ENCODE measurements at regions of chr12 and their contacts with region 1.

Region 1: DNA sequence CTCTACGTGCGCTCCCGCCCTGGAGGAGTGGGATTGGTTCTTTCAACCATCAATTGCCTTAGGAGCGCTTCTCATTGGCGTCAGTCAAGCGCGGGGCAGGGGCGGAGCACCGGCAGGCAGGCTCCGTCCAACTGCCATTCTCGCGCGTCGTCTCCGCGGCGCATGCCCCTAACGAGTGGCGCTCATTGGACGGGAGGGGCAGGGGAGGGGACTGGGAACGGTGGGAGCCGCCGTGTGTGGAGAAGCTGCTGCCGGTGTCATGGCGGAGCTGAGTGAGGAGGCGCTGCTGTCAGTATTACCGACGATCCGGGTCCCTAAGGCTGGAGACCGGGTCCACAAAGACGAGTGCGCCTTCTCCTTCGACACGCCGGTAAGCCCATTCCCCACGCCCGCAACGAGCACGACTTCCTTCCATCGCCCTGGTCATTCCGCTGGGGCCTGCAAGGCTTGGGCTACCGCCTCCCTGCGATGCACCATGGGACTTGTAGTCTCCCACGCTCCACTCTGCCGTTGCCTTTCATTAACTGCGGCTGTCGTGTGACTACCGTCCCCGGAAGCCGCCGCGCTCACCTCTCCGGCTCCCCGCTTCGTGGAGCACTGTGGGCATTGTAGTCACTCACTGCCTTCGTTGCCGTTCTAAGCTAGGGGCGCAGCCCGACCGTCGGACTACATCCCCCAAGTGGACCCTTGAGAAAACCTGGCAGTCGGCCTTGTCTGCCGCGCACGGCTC is at the start of gene USP5:
- H3K4me3 ChIP-seq: peak within 1 kb of the TSS; percentile 76
- H3K27ac ChIP-seq: peak within 1 kb of the TSS; percentile 58
- H3K4me1 ChIP-seq: peaks cover 11% of the 10 kb centered on the region
- CTCF ChIP-seq: peak; percentile 70

Region 2: GRCh38 chr12:6833189-6833890 is 18.7 kb before region 1 on chr12:
- CTCF ChIA-PET with region 1: interaction called, 75 read pairs
- POLR2A ChIA-PET with region 1: interaction called, 55 read pairs
- H3K4me3 ChIP-seq: no peak overlapping the region
- H3K27ac ChIP-seq: no peak overlapping the region
- H3K4me1 ChIP-seq: no peaks in the 10 kb centered on the region
- CTCF ChIP-seq: no peak

Region 3: DNA sequence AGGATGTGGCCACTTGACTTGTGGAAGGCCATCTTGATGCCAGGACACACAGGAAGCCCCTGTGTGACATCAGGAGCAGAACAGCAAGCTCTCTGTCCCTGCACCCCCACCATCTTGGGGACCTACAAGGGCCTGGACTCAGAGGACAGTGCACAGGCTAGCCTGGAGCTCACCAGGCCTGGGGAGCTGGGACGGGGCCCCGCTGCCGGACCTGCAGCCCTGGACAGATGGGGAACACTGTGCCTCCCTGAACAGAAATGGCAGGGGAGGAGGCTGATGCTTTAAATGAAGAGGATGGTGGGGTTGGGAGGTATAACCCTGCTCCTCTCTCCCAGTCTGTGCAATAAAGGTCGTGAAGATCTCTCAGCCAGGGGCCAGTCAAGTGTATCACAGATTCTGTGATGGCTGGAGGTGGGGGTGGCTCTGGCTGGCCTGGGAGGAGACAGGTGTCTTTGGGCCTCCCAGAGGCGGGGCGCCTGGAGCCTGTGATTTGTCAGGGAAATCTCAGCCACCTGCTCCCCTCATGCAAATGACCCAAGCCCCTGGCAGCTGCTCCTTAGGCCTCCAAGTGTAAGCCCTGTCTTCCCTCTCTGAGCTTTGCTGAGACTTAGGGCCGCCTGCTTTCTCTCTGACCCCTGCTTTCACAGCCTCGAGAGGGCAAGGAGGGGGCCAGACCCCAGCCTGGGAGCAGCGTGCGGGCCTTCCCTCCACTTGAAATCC is 12.4 kb before region 1 on chr12:
- CTCF ChIA-PET with region 1: interaction called, 75 read pairs
- POLR2A ChIA-PET with region 1: interaction called, 62 read pairs
- H3K4me3 ChIP-seq: no peak overlapping the region
- H3K27ac ChIP-seq: no peak overlapping the region
- H3K4me1 ChIP-seq: no peaks in the 10 kb centered on the region
- CTCF ChIP-seq: no peak

Region 4: DNA sequence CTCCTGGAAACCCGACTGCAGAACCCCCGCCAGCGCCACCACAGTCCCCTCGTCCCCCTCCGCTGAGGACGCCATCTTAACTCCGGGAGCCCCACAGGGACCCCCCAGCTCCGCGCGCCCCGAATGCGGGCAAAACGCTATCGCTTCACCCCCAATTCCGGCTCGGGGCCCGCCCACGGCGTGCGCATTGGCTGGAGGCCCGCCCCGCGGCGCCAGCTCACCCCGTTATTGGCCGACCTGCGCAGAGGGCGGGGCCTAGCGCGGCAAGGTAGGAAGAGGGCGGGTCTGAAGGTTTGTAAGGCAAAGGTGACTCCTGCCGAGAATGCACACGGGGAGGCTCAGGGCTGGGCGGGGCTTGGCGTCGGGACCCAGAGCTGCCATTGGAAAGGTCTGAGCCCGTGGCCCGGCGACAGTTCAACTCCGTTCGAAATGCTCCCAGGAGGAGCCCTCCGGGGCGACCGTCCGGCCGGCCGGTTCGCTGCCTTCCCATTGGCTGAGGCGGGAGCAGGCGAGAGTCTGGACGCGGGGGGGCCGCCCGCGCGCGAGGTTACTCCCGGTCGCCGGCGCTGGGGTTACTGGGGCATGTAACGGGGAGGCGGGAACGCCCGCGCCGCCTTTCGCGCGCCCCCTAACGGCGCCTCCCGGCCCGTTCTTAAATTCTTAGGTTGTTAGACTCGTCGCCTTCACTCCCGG is 166.4 kb after region 1 on chr12 and contains the start of gene LPCAT3:
- CTCF ChIA-PET with region 1: no interaction called
- POLR2A ChIA-PET with region 1: no interaction called
- H3K4me3 ChIP-seq: peak within 1 kb of the TSS; percentile 89
- H3K27ac ChIP-seq: peak within 1 kb of the TSS; percentile 90
- H3K4me1 ChIP-seq: peaks cover 25% of the 10 kb centered on the region
- CTCF ChIP-seq: peak; percentile 92